PC-3 (cell line): ENCODE measurements at regions of chr14 and their contacts with region 1.

Region 1: GRCh38 chr14:23727566-23728335 is 91.6 kb downstream of the DHRS2 start:
- DNase-seq: peak; percentile 77
- ATAC-seq: peak; percentile 87
- H3K4me3 ChIP-seq: no peak overlapping the region
- H3K27ac ChIP-seq: no peak overlapping the region
- H3K4me1 ChIP-seq: no peaks in the 10 kb centered on the region; the same call in 1 of the 2 replicates
- H3K27me3 ChIP-seq: 0 out of 2 replicates have a peak, but pooled peaks cover 7% of the 10 kb centered on the region
- CTCF ChIP-seq: peak; percentile 72

Region 2: DNA sequence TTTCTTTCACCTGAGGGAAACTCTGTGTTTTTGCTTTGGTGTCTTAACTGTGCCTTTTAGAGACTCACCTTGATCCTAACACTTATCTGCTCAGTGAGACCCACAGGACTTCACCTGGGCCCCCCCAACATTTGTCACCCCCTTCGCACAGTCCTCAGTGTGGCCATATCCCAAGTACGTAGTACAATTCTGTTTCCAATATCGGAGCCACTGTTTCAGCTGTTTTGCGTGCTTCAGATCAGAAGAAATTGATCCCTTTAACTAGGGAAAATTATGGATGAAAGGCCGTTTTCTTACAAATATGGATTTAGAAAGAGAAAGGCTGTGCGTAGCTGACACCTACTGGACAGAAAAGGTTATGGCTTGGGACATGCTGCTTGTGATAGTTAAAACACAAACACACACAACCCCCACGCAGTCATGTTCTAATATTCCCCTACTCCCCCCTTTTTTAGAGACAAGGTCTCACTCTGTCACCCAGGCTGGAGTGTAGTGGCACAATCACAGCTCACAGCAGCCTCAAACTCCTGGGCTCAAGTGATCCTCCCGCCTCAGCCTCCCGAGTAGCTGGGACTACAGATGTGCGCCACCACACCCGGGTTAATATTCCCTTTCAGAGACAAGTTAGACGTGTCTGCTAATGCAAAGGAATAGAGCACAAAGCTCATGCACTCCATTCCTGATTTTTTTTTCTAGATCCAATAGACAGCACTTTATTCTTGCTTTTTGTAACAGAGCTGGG is 540.7 kb before region 1 on chr14:
- CTCF ChIA-PET with region 1: no interaction called
- POLR2A ChIA-PET with region 1: no interaction called
- intact Hi-C with region 1: no loop called
- DNase-seq: peak; percentile 76
- ATAC-seq: peak; percentile 57
- H3K4me3 ChIP-seq: no peak overlapping the region
- H3K27ac ChIP-seq: no peak overlapping the region
- H3K4me1 ChIP-seq: peaks cover 13% of the 10 kb centered on the region
- H3K27me3 ChIP-seq: no peaks in the 10 kb centered on the region
- CTCF ChIP-seq: peak; percentile 87

Region 3: GRCh38 chr14:23352511-23353432 is 375.0 kb before region 1 on chr14 and contains the start of gene SLC22A17:
- CTCF ChIA-PET with region 1: no interaction called
- POLR2A ChIA-PET with region 1: no interaction called
- intact Hi-C with region 1: no loop called
- DNase-seq: peak; percentile 72
- ATAC-seq: peak; percentile 96
- H3K4me3 ChIP-seq: peak within 1 kb of the TSS; percentile 70
- H3K27ac ChIP-seq: no peak within 1 kb of the TSS
- H3K4me1 ChIP-seq: no peaks in the 10 kb centered on the region
- H3K27me3 ChIP-seq: peaks cover 48% of the 10 kb centered on the region
- CTCF ChIP-seq: no peak
- total RNA-seq, gene SLC22A17: 12.0 and 13.2 TPM in 2 replicates

Region 4: GRCh38 chr14:23929822-23930294 is 202.1 kb after region 1 on chr14:
- CTCF ChIA-PET with region 1: interaction called, 3 read pairs
- POLR2A ChIA-PET with region 1: no interaction called
- intact Hi-C with region 1: loop called (anchors 1 kb)
- DNase-seq: peak; percentile 86
- ATAC-seq: peak; percentile 85
- H3K4me3 ChIP-seq: no peak overlapping the region
- H3K27ac ChIP-seq: no peak overlapping the region
- H3K4me1 ChIP-seq: no peaks in the 10 kb centered on the region
- H3K27me3 ChIP-seq: no peaks in the 10 kb centered on the region
- CTCF ChIP-seq: peak; percentile 96